Activated CD8-positive, alpha-beta memory T cell treated with anti-CD3 and anti-CD28 coated beads, Interleukin-2, amount 10 ng/mL, durations not matched to agents 7 days and 5 days (primary cell): ENCODE measurements at regions of chr11 and their contacts with region 1.

Region 1: DNA sequence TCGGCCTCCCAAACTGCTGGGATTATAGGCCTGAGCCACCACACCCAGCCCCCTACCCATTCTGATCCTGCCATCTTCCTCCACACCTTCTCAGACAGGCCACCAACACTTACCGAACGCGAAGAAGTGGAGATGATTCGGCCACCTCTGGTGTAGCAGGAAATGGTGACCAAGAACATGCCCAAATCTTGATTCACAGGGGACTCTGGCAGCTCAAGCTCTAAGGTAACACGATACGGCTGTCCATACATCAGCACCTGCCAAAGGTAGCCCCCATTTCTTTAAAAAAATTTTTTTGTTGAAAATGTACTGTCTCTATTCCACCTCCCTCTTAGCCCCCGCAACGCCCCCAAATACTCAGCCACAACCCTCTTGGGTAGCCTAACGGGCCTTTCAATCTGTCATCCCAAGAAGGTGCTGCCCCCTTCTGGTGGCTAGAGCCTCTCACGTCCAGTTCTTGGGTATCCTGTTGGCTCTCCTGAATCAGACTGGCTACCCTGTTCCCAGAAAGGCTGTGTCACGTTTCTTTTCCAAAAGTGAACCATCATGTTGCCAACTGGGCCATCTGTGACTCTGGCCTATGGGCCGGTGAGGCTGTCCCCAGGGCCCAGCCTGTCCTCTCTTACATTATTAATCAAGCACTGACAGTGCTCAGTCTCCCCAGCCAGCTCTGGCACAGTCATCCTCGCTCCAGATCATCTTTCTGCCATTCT is 5.3 kb upstream of the LRRN4CL start:
- DNase-seq: peak; percentile 85
- ATAC-seq: peak; percentile 88
- H3K4me3 Mint-ChIP-seq: no peak overlapping the region
- H3K27ac Mint-ChIP-seq: no peak overlapping the region
- H3K4me1 Mint-ChIP-seq: peaks cover 5% of the 10 kb centered on the region
- H3K27me3 Mint-ChIP-seq: no peaks in the 10 kb centered on the region

Region 2: GRCh38 chr11:62612366-62613290 is 82.0 kb before region 1 on chr11 and contains the starts of genes EML3 and ROM1:
- CTCF ChIA-PET with region 1: interaction called, 10 read pairs
- DNase-seq: peak; percentile 95
- ATAC-seq: peak; percentile 83
- H3K4me3 Mint-ChIP-seq: peak within 1 kb of the TSS; percentile 100
- H3K27ac Mint-ChIP-seq: peak within 1 kb of the TSS; percentile 99
- H3K4me1 Mint-ChIP-seq: peaks cover 48% of the 10 kb centered on the region
- H3K27me3 Mint-ChIP-seq: no peaks in the 10 kb centered on the region
- total RNA-seq, gene EML3: 132 to 133 TPM
- total RNA-seq, gene ROM1: 1.1 to 1.5 TPM

Region 3: DNA sequence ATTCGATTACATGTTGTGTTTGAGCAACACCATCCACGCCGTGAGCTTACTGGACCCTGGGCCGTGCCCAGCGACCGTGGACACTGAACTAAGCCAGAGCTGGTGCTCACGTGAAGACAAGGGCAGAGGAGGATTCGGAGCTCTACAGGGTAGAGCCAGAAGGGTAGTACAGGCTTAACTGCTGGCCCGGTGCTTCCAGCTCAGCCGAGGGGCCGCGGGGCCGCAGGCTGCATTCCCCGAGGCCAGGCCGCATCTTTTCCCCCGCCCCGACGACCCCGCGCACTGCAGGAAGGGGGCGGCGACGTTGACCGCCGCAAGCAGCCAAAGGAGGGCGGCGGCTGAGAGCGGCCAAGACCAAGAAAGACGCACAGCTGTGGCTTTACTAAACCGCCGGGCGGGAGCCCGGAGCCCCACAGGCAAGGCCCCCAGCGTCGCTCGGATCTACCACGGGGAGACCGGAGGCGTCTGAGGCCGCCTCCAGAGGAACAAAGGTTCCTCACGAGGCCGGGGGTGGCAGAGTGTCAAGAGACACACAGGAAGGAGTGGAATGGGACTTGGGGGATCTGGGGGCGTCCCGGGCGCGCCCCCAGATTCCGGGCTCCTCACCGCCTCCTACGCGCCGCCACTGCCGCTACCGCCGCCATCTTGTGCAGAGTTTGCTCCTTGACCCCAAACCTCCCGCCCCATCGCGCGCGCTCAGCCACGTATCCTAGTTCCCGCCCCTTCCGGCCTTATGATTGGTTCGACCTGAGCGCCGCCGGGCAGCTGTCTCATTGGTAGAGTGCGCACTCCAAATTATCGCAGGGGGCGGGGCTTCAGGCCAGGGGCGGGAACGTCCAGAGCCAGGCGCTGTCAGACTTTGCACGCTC is 48.4 kb before region 1 on chr11 and contains the start of gene GANAB:
- CTCF ChIA-PET with region 1: no interaction called
- DNase-seq: peak; percentile 100
- ATAC-seq: peak; percentile 98
- H3K4me3 Mint-ChIP-seq: peak within 1 kb of the TSS; percentile 89
- H3K27ac Mint-ChIP-seq: peak within 1 kb of the TSS; percentile 93
- H3K4me1 Mint-ChIP-seq: peaks cover 39% of the 10 kb centered on the region
- H3K27me3 Mint-ChIP-seq: no peaks in the 10 kb centered on the region
- total RNA-seq, gene GANAB: 248 to 275 TPM

Region 4: DNA sequence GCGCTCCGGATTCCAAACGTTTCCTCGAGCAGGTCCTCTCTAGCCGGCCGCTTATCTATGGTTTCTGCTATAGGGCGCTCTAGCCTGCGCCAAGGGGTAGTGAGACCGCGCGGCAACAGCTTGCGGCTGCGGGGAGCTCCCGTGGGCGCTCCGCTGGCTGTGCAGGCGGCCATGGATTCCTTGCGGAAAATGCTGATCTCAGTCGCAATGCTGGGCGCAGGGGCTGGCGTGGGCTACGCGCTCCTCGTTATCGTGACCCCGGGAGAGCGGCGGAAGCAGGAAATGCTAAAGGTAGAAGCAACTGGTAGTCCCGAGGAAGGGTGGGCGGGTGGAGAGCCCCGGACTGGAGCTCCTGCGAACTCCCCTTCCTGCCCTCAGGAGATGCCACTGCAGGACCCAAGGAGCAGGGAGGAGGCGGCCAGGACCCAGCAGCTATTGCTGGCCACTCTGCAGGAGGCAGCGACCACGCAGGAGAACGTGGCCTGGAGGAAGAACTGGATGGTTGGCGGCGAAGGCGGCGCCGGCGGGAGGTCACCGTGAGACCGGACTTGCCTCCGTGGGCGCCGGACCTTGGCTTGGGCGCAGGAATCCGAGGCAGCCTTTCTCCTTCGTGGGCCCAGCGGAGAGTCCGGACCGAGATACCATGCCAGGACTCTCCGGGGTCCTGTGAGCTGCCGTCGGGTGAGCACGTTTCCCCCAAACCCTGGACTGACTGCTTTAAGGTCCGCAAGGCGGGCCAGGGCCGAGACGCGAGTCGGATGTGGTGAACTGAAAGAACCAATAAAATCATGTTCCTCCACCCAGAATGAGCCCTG is 22.8 kb before region 1 on chr11 and contains the starts of genes LBHD1 and UQCC3:
- CTCF ChIA-PET with region 1: interaction called, 27 read pairs
- DNase-seq: peak; percentile 96
- ATAC-seq: peak; percentile 83
- H3K4me3 Mint-ChIP-seq: peak within 1 kb of the TSS; percentile 95
- H3K27ac Mint-ChIP-seq: peak within 1 kb of the TSS; percentile 96
- H3K4me1 Mint-ChIP-seq: peaks cover 54% of the 10 kb centered on the region
- H3K27me3 Mint-ChIP-seq: no peaks in the 10 kb centered on the region
- total RNA-seq, gene LBHD1: 17.7 to 27.5 TPM
- total RNA-seq, gene UQCC3: 7.2 to 9.0 TPM

Region 5: GRCh38 chr11:62678770-62679696 is 15.6 kb before region 1 on chr11 and contains the start of gene UBXN1:
- CTCF ChIA-PET with region 1: interaction called, 42 read pairs
- DNase-seq: peak; percentile 89
- ATAC-seq: peak; percentile 90
- H3K4me3 Mint-ChIP-seq: peak within 1 kb of the TSS; percentile 84
- H3K27ac Mint-ChIP-seq: peak within 1 kb of the TSS; percentile 90
- H3K4me1 Mint-ChIP-seq: peaks cover 34% of the 10 kb centered on the region
- H3K27me3 Mint-ChIP-seq: no peaks in the 10 kb centered on the region
- total RNA-seq, gene UBXN1: 115 to 152 TPM

Region 6: GRCh38 chr11:62705880-62706849 is 11.6 kb after region 1 on chr11:
- CTCF ChIA-PET with region 1: interaction called, 44 read pairs
- DNase-seq: peak; percentile 96
- ATAC-seq: peak; percentile 76
- H3K4me3 Mint-ChIP-seq: peak overlapping the region; percentile 88
- H3K27ac Mint-ChIP-seq: peak overlapping the region; percentile 74
- H3K4me1 Mint-ChIP-seq: peaks cover 51% of the 10 kb centered on the region
- H3K27me3 Mint-ChIP-seq: no peaks in the 10 kb centered on the region